ENCODE measurements at regions of chr6 and their contacts with region 1.

Region 1: DNA sequence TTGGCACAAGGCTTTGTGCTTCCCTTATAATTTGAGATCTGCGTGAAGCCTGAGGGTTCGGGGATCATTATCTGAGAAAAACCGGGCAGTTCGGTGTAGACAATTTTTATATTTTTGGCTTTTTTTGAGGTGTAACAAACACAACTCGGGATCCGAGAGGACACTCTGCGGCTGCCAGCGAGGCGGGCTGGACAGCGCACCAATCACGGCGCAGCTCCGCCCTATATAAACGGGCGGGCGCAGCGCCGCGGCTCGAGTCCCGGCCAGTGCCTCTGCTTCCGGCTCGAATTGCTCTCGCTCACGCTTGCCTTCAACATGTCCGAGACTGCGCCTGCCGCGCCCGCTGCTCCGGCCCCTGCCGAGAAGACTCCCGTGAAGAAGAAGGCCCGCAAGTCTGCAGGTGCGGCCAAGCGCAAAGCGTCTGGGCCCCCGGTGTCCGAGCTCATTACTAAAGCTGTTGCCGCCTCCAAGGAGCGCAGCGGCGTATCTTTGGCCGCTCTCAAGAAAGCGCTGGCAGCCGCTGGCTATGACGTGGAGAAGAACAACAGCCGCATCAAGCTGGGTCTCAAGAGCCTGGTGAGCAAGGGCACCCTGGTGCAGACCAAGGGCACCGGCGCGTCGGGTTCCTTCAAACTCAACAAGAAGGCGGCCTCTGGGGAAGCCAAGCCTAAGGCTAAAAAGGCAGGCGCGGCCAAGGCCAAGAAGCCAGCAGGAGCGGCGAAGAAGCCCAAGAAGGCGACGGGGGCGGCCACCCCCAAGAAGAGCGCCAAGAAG is 69.0 kb downstream of the HFE start:
- DNase-seq: peak; percentile 97

Region 2: DNA sequence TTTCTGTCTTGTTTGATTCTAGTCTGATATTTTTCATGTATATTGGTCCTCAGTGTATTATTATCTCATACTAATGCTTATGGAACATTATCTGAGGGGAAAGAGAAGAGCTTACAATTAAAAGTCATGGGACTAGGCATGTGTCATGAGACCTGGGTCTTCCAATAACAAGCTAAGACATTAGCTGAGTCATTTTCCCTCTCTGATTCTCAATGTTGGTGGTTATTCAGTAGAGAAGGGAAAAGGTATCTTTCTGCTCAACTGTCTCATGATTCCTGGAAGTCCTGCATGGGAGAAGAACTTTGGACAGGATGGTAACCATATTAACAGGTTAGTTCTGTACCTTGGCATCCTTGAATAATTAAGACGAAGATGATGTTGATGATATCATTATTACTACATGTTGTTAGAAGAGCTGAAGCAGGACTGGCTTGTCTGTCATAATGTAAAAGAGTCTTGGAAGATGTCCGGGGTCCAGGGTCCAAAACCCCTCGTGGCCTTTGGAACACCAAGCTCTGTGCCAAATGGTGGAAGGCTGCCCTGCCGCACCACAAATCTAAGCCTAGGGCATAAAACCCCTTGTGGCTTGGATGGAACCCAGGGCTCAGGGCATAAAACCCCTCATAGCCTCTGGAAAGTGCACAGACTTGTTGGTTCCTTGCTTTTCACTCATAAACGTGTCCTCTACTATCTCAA is 174.5 kb before region 1 on chr6:
- intact Hi-C with region 1: no loop called
- DNase-seq: no peak

Region 3: DNA sequence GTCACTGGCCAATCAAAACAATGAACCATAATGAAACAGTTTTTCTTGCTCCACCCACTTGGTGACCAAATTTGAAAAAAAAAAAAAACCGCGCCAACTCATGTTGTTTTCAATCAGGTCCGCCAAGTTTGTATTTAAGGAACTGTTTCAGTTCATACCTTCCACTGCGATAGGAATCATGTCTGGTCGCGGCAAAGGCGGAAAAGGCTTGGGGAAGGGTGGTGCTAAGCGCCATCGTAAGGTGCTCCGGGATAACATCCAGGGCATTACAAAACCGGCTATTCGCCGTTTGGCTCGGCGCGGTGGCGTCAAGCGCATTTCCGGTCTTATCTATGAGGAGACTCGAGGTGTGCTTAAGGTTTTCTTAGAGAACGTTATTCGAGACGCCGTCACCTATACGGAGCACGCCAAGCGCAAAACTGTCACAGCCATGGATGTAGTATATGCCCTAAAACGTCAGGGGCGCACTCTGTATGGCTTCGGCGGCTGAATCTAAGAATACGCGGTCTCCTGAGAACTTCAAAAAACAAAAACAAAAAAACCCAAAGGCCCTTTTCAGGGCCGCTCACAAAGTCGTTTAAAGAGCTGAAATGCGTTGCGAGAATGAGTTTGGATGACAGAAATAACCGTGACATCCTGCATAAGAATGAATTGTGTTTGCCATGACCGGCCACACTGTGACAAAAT is 52.4 kb before region 1 on chr6:
- intact Hi-C with region 1: loop called (anchors 10 kb)
- DNase-seq: peak; percentile 92

Region 4: DNA sequence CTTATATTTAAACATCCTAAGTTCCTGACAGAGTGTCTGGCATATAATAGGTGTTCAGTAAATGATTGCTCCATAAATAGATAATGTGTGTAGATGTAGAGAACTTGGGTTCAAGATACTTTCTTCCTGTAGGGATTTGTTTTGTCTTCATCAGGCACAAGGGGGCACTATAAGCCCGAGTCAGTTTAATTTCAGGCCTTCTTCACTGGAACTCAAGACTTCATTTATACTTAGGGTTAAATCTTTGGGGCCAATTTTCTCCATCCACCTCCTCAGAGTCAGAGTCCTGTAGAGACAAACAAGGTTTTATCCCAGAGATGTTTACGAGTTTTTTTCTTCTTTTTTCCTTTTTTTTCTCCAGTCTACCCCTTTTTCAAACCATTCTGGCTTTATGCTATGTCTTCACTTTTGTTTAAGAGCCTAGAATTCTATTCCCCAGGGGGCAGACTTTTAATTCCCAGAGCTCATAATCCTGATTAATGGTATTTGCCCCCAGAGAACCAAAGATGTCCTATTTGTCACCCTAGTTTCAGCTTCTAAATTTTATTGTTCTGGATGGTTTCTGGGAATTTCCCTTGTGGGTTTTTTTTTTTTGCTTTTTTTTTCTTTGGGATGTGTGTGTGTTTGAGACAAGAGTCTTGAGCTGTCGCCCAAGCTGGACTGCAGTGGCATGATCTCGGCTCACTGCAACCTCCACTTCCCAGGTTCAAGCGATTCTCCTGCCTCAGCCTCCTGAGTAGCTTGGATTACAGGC is 19.3 kb after region 1 on chr6:
- intact Hi-C with region 1: loop called (anchors 2 kb)
- DNase-seq: no peak

Region 5: DNA sequence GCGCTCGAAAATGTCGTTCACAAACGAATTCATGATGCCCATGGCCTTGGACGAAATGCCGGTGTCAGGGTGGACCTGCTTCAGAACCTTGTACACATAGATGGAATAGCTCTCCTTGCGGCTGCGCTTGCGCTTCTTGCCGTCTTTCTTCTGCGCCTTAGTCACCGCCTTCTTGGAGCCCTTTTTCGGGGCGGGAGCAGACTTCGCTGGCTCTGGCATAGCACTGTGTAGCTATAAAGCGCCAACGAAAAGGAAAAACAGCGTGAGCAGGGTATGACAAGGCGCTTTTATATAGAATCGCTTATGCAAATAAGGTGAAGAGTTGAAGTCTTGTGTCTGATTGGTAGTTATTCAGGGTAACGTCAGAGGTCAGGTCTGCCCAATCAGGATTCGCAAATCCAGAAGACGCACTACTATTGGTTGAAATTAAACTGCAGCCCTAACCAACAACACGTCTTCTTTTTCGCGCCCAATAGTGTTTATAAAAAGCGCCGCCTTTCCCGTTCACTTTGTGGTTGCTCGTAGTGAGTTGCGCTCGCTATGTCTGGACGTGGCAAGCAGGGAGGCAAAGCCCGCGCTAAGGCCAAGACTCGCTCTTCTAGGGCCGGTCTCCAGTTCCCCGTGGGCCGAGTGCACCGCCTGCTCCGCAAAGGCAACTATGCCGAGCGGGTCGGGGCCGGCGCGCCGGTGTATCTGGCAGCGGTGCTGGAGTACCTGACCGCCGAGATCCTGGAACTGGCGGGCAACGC is 976.4 kb after region 1 on chr6:
- intact Hi-C with region 1: loop called (anchors 5 kb)
- DNase-seq: peak; percentile 87